Ascending aorta (tissue), 2 donors: ENCODE measurements at regions of chr10 and their contacts with region 1.

Region 1: GRCh38 chr10:110803830-110804338 is 67.8 kb upstream of the PDCD4 start:
- DNase-seq: peak in 1 of 2 donors; percentile 73
- H3K4me3 ChIP-seq: no peak overlapping the region
- H3K27ac ChIP-seq: peak overlapping the region in 1 of 2 donors; percentile 47
- H3K4me1 ChIP-seq: peaks cover 9 to 23% of the 10 kb centered on the region in 2 donors
- H3K27me3 ChIP-seq: no peaks in the 10 kb centered on the region
- CTCF ChIP-seq: peak; percentile 63 to 73 (median 64)

Region 2: DNA sequence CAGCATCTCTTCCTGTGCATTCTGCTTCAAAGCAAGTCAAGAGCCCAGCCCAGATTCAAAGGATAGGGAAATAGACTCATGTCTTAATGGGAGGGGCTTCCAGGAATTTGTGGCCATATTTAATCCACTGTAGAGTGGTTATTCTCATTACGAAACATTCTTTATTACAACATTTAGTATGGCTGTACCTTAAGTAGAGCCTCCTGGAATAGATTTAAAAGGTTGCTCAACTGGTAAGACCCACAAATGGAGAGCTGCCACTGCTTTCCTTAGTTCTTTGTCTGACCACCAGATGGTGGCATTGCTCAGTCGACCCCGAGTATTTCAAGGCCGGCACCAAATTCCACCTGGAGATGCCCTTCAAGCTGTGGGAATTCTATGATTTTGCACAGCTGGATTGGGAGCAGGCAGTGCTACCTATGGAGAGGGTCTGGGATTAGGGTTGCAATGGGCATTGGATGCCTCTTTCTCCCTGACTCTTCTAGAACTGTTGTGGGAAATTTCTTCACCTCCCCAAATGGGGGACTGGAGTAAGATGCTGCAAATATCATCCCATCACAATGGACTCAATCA is 57.5 kb before region 1 on chr10:
- intact Hi-C with region 1: loop called (anchors 5 kb)
- DNase-seq: peak in 1 of 2 donors; percentile 81
- H3K4me3 ChIP-seq: no peak overlapping the region
- H3K27ac ChIP-seq: no peak overlapping the region
- H3K4me1 ChIP-seq: peaks cover 0 to 3% of the 10 kb centered on the region in 2 donors
- H3K27me3 ChIP-seq: no peaks in the 10 kb centered on the region
- CTCF ChIP-seq: peak; percentile 78 to 85 (median 79)

Region 3: DNA sequence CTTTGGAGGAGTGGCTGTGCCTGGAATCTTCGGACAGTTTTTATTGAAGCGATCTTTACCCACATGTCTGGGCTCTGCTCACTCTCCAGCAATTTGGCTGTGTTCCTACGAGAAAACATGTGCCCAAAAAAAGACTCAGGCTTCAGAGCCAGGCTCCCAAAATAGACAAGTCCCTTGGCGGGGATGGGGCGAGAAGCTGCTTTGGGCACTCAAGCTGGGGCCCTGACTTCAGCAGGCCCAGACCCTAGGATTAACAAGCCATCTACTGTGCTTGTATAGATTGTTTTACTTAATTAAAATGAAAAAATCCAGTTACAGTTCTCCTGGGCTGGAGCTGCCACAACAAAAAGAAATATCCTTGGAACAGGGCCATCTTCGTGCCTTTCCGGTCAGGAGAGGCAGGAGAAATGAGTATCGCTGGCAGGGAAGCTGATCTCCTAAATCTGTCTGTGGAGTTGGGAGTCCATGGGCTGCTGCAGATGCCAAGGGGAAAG is 16.5 kb after region 1 on chr10:
- intact Hi-C with region 1: loop called (anchors 2 kb)
- DNase-seq: peak in 1 of 2 donors; percentile 90
- H3K4me3 ChIP-seq: peak overlapping the region in 1 of 2 donors; percentile 12
- H3K27ac ChIP-seq: peak overlapping the region; percentile 86 to 91
- H3K4me1 ChIP-seq: peaks cover 33 to 58% of the 10 kb centered on the region in 2 donors
- H3K27me3 ChIP-seq: no peaks in the 10 kb centered on the region
- CTCF ChIP-seq: no peak

Region 4: DNA sequence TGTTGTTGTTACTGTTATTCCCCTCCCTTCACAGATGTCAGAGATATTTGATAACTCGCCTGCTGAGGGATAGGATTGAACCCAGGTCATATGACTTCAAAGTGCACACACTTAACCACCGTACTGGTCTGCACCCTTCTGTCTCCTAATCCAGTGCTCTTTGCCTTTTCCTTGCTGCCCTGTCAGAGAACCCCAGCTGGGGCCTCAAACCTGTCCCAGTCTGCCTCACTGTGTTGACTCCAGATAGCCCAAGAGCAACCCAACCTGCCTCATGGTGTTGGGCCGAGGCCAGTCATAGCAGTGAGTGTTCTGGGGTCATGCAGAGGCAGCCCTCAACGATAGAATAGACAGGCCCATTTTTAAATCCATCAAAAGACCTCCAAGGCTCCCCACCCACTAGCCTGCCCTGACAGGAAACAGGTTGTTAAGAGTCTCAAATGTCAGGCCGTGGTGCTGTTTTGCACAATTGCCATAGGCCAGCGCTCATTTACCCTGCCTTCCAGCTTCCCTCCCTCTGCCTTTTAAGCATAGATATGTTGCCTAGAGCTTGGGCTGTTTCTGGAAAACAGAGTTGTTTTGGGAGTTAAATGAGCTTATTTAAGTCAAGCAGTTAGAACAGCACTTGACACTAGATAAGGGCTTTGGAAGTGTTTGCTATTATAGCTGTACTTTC is 30.9 kb after region 1 on chr10:
- intact Hi-C with region 1: loop called (anchors 5 kb)
- DNase-seq: peak; percentile 33 to 77
- H3K4me3 ChIP-seq: no peak overlapping the region
- H3K27ac ChIP-seq: peak overlapping the region; percentile 78 to 82
- H3K4me1 ChIP-seq: peaks cover 14 to 40% of the 10 kb centered on the region in 2 donors
- H3K27me3 ChIP-seq: no peaks in the 10 kb centered on the region
- CTCF ChIP-seq: no peak

Region 5: GRCh38 chr10:110871298-110872084 is 67.6 kb after region 1 on chr10 and contains the start of gene PDCD4:
- intact Hi-C with region 1: loop called (anchors 2 kb)
- DNase-seq: peak; percentile 99 to 100
- H3K4me3 ChIP-seq: peak within 1 kb of the TSS; percentile 87 to 88
- H3K27ac ChIP-seq: peak within 1 kb of the TSS; percentile 97 to 99
- H3K4me1 ChIP-seq: peaks cover 16 to 35% of the 10 kb centered on the region in 2 donors
- H3K27me3 ChIP-seq: no peaks in the 10 kb centered on the region
- CTCF ChIP-seq: no peak
- total RNA-seq, gene PDCD4: 10.3 TPM

Region 6: GRCh38 chr10:110893559-110894179 is 89.8 kb after region 1 on chr10:
- intact Hi-C with region 1: loop called (anchors 1 kb)
- DNase-seq: no peak
- H3K4me3 ChIP-seq: no peak overlapping the region
- H3K27ac ChIP-seq: no peak overlapping the region
- H3K4me1 ChIP-seq: no peaks in the 10 kb centered on the region
- H3K27me3 ChIP-seq: no peaks in the 10 kb centered on the region
- CTCF ChIP-seq: peak; percentile 43 to 67 (median 47)

Region 7: DNA sequence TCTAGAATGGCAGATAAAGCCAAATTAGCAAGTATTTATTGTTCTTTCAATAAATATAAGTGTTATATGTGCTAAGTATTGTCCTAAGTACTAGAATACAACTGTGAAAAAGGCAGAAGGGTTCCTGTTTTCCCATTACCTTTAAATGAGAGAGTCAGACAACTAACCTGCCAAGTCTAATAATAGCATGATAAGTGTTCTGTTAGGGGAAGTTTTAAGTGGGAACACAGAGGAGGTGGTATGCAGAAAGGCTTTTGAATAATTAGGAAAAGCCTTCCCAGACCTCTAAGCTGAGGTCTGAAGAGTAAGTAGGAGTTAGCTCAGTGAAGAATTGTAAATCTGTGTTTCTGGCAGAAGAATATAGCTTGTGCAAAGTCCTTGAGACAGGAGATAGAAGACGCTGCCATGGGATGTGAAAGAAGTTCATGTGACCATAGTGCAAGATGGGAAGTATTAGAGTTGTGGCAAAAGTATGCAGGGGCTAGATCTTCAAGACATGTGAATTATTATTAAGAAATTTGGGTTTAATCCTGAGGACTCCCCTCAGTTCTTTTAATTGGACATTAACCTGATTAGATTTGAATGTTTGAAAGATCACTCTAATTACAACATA is 128.0 kb after region 1 on chr10:
- intact Hi-C with region 1: no loop called
- DNase-seq: no peak
- H3K4me3 ChIP-seq: no peak overlapping the region
- H3K27ac ChIP-seq: no peak overlapping the region
- H3K4me1 ChIP-seq: peaks cover 0 to 16% of the 10 kb centered on the region in 2 donors
- H3K27me3 ChIP-seq: no peaks in the 10 kb centered on the region
- CTCF ChIP-seq: no peak